Activated CD4-positive, alpha-beta T cell treated with anti-CD3 and anti-CD28 coated beads, Interleukin-2, amount 10 ng/mL, durations not matched to agents 24 days and 14 days (primary cell): ENCODE measurements at regions of chr2 and their contacts with region 1.

Region 1: DNA sequence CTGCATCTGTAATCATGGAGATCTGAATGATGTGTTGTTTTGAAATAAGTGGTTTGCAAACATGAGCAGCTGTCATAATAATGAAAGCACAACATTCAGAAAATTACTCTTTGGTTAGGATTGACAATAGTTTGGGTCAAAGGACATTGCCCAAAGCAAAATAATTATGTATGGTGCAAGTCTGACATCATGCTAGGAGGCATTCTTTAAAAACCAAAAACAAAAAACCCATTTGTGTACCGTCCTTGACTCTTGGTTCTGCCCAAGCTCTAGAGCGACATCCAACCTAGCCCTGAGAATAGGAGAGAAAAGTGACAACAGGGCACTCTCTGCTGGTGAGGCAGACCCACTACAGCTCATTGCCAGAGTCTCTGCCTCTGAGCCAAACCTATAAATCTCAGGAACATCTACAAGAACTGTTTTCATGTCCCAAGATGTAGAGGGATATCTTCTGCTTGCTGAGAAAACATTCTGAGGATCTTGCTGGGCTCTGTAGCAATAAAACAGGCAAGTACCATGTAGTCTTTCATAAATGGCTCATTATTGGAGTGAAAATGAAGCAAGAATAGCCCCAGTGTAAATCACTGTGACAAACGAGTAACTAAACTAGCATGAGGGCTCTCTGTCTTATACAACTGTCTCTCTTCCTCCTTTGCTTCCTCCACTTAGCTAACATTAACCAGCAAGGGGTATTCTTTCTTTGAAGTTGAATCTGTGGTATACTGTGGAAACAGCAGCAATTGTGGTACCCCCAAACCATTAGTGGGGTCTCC is 266.8 kb upstream of the CXCR4 start:
- DNase-seq: peak; percentile 87
- H3K4me3 Mint-ChIP-seq: peak overlapping the region; percentile 27
- H3K27ac Mint-ChIP-seq: peak overlapping the region; percentile 93
- H3K4me1 Mint-ChIP-seq: peaks cover 44% of the 10 kb centered on the region
- H3K27me3 Mint-ChIP-seq: no peaks in the 10 kb centered on the region

Region 2: GRCh38 chr2:134918526-134919340 is 1466.0 kb before region 1 on chr2 and contains the start of gene CCNT2:
- intact Hi-C with region 1: loop called (anchors 1 kb)
- DNase-seq: peak; percentile 100
- H3K4me3 Mint-ChIP-seq: peak within 1 kb of the TSS; percentile 96
- H3K27ac Mint-ChIP-seq: peak within 1 kb of the TSS; percentile 97
- H3K4me1 Mint-ChIP-seq: peaks cover 23% of the 10 kb centered on the region
- H3K27me3 Mint-ChIP-seq: peaks cover 6% of the 10 kb centered on the region
- total RNA-seq, gene CCNT2: 46.0 and 48.5 TPM in 2 replicates

Region 3: DNA sequence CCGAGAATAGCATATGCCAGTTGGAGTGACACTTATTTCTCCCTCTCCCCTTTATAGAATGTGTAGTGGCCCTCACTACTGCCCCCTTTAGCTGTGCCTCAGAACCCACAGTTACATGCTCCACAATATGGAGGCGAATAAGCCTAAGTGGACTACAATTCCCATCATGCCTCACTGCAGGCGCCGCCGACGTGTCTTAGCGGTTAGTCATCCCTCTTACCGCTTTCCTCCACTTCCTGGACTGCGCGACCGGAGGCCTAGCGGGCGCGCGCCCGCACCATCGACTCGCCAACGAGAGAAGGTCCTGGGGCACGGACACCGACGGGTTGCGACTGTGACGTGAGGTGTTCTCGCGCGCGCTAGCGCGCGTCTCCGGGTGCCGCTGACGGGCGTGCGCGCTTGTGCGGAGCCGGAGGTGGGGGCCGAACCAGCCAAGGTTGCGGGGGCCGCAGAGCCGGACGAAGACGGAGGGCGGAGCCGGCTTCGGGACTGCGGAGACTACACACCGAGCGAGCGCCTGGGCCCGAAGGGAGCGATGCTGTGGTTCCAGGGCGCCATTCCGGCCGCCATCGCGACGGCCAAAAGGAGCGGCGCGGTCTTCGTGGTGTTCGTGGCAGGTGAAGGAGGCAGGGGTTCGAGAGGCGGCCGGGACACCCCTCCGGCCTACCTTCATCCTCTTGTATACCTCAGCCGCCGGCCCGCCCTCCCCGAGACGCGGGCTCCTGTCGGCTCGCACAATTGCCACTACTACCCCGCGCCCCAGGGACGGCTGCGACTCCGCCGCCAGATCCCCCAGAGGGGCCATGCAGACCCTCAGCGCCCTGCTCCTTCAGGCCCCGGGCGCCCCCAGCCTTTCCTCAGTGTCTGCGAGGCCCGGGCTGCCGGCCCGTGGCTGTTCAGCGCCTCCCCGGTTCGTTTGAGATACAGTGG is 643.1 kb before region 1 on chr2 and contains the start of gene UBXN4:
- intact Hi-C with region 1: loop called (anchors 5 kb)
- DNase-seq: peak; percentile 96
- H3K4me3 Mint-ChIP-seq: peak within 1 kb of the TSS; percentile 99
- H3K27ac Mint-ChIP-seq: peak within 1 kb of the TSS; percentile 100
- H3K4me1 Mint-ChIP-seq: peaks cover 36% of the 10 kb centered on the region
- H3K27me3 Mint-ChIP-seq: no peaks in the 10 kb centered on the region
- total RNA-seq, gene UBXN4: 116 and 127 TPM in 2 replicates

Region 4: DNA sequence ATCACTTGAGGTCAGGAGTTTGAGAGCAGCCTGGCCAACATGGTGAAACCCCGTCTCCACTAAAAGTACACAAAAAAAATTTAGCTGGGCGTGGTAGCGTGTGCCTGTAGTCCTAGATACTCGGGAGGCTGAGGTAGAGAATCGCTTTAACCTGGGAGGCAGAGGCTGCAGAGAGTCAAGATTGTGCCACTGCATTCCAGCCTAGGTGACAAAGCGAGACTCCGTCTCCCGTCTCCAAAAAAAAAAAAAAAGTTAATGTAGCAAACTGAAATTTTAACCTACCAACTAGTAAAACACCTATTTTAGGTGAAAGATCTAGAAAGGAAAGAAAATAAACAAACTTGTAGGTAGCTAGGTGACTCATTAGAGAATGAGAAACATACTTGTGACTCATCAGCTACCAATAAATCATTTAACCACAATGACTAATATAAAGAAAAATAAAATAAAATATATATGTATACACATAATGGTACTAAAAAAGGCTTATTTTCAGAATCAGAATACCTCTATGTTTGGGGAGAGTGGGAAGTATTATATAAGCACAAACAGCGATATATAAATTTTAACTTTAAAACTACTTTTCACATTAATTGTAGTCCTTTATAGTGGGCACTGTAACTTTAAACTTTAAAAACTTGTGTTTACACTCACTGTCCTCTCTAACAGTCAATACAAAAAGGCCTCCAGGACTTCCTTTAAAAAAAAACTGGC is 435.9 kb before region 1 on chr2:
- intact Hi-C with region 1: loop called (anchors 1 kb)
- DNase-seq: peak; percentile 71
- H3K4me3 Mint-ChIP-seq: peak overlapping the region; percentile 60
- H3K27ac Mint-ChIP-seq: peak overlapping the region; percentile 94
- H3K4me1 Mint-ChIP-seq: peaks cover 51% of the 10 kb centered on the region
- H3K27me3 Mint-ChIP-seq: no peaks in the 10 kb centered on the region

Region 5: DNA sequence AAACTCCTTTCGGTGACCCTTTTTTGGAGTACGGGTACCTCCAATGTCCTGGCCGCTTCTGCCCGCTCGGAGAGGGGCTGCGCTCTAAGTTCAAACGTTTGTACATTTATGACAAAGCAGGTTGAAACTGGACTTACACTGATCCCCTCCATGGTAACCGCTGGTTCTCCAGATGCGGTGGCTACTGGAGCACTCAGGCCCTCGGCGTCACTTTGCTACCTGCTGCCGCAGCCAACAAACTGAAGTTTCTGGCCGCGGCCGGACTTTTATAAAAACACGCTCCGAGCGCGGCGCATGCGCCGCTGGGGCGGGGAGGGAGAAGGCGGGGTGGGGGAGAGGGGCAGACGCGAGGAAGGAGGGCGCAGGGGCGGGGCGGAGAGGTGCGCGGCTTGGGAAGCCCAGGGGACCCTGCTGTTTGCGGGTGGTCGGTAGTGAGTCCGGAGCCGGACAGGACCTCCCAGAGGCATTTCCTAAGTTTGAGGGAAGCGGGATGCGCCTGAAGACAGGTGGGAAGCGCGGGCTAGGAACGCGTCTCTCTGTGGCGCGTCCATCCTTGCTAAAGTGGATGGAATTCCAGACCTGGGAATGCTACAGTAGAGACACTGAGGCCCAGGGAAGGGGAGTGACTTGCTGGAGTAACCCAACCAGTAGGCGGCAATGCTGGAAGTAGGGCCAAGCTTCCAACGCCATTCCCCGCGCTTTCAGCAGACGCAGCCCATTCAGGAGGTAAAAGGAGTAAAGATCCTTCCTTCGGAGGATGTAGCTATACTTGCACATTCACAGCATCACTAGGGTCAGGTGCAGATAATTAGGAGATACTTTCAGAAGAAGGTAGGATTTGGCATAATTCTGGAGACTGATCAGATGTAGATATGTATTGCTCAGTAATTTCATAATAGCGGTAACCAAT is 266.6 kb before region 1 on chr2 and contains the start of gene CXCR4:
- intact Hi-C with region 1: loop called (anchors 1 kb)
- DNase-seq: peak; percentile 97
- H3K4me3 Mint-ChIP-seq: peak within 1 kb of the TSS; percentile 98
- H3K27ac Mint-ChIP-seq: peak within 1 kb of the TSS; percentile 95
- H3K4me1 Mint-ChIP-seq: peaks cover 63% of the 10 kb centered on the region
- H3K27me3 Mint-ChIP-seq: peaks cover 35% of the 10 kb centered on the region
- total RNA-seq, gene CXCR4: 88.8 and 92.7 TPM in 2 replicates

Region 6: GRCh38 chr2:136319651-136320050 is 65.1 kb before region 1 on chr2:
- intact Hi-C with region 1: loop called (anchors 1 kb)
- DNase-seq: no peak
- H3K4me3 Mint-ChIP-seq: peak overlapping the region; percentile 55
- H3K27ac Mint-ChIP-seq: peak overlapping the region; percentile 71
- H3K4me1 Mint-ChIP-seq: peaks cover 45% of the 10 kb centered on the region
- H3K27me3 Mint-ChIP-seq: peaks cover 1% of the 10 kb centered on the region

Region 7: DNA sequence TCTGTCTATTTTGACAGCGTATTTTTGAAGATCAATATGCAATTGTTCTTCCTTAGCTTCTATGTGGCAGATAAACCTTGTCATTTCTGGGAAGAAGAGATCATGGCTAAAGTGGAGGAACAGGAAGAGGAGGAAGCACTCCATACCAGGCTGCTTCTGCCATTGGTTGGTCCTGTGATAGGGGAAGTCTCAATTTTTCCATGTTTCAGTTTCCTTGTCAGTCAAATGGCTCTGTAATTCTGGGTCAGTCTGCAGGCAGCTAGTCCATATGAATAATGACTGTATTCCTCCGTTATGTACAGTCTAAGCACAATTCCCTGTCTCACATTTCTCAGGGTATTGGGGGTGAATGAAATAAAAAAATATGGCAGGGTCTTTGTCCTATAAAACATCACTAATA is 10.9 kb after region 1 on chr2:
- intact Hi-C with region 1: no loop called
- DNase-seq: no peak
- H3K4me3 Mint-ChIP-seq: no peak overlapping the region
- H3K27ac Mint-ChIP-seq: no peak overlapping the region
- H3K4me1 Mint-ChIP-seq: peaks cover 21% of the 10 kb centered on the region
- H3K27me3 Mint-ChIP-seq: peaks cover 9% of the 10 kb centered on the region